Posterior vena cava (tissue), 2 donors: ENCODE measurements at regions of chr3 and their contacts with region 1.

Region 1: GRCh38 chr3:66789580-66790237 is 208.4 kb upstream of the KBTBD8 start:
- DNase-seq: no peak

Region 2: GRCh38 chr3:66762916-66763710 is 26.6 kb before region 1 on chr3:
- intact Hi-C with region 1: loop called in 1 of 2 experiments (anchors 2 kb)
- DNase-seq: no peak

Region 3: DNA sequence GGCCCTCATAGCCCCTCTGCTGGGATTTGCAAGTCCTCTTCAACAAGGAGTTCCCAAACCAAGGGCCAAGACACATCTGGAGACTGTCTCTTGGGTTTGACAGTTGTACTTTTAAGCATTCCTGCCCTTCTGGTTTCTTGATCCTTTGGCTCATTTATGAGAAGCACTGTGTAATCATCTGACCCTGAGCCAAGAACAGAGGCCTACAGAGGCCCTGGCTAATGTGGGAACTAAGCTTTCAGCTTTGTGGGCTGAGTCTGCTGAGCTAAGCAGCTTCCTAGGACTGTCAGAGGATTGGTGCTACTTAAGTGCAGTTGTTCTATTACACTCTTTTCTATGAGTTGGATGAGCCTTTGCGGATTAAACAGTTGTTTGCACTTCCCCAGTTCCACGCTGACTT is 386.7 kb after region 1 on chr3:
- intact Hi-C with region 1: loop called in 1 of 2 experiments (anchors 5 kb)
- DNase-seq: no peak